ENCODE measurements at regions of chr1 and their contacts with region 1.

Region 1: DNA sequence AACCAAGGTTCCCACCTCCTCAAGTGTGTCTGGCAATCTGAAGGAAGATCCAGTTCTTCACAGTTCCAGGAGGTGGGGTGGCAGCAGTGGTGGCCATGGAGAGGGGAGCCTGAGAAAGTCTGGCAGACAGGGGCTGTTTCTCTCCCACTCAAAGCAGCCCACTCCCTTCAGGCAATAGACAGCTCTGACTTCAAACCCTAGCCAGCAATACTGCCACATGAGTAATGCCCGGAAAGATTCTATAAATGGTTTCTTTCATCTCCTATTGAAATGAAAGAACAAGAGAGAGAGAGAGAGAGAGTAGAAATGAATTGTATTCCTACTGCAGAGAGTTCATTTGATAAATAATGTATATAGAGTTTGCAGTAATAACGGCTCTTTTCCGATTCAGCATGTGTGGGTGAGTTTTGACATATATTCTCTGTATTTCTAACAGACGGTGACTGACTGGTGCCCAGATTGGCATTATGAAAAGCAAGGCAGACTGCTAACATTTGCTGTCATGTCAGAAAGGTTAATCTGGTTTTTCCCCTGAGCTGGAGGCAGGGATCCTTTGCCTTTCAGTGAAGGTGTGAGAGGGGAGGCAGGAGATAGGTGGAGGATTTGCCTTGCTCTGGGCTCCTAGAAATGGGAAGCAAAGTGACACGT is 267.1 kb upstream of the KIAA0040 start:
- DNase-seq: no peak
- H3K4me3 ChIP-seq: no peak overlapping the region
- H3K27ac ChIP-seq: no peak overlapping the region
- H3K4me1 ChIP-seq: no peaks in the 10 kb centered on the region
- H3K27me3 ChIP-seq: no peaks in the 10 kb centered on the region
- CTCF ChIP-seq: no peak
- POLR2A ChIP-seq: no peak

Region 2: GRCh38 chr1:174032671-174033222 is 1427.0 kb before region 1 on chr1:
- intact Hi-C with region 1: no loop called
- DNase-seq: no peak
- H3K4me3 ChIP-seq: no peak overlapping the region
- H3K27ac ChIP-seq: no peak overlapping the region
- H3K4me1 ChIP-seq: no peaks in the 10 kb centered on the region
- H3K27me3 ChIP-seq: no peaks in the 10 kb centered on the region
- CTCF ChIP-seq: no peak
- POLR2A ChIP-seq: no peak

Region 3: DNA sequence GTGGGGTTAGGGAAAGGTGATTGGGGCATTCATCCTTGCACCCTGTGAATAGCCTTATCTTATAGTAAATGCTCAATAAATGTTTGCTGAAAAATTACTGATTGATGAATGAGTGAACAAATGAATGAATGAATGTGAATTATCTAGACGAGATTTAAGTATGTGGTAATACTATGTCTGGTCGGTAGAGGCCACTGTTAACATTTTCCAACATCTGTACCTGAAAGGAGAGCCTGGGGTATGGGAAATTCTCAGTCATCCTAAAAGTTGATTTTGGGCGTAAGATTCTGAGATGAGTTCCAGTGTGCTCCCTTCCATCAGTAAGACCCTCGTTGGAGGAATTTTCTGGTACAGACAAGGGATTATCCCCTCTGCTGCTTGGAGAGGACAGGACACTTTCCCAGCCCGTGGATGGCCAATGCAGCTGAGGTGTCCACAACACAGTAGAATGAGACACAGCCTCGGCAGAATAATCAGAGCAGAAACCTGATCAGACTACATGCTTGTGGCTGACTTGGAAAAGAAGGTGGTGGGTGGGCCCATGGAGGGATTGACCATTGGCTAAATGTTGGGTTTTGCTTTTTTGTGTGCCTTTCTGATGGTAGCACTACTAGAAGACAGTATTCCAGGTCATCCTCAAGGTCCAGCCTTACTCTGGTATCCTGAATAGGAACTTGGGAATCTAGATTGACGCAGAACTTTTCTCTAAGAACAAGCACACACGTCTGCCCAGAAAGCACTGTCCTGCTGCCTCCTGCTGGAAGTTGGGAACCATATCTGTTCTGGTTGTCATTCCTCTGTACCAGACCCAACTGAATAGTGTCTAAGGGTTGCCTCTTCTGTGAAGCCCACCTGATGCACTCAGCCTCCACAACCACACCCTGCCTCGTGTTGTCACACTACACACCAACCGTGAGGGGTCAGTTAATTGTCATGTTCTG is 21.7 kb after region 1 on chr1:
- intact Hi-C with region 1: no loop called
- DNase-seq: no peak
- H3K4me3 ChIP-seq: no peak overlapping the region
- H3K27ac ChIP-seq: no peak overlapping the region
- H3K4me1 ChIP-seq: no peaks in the 10 kb centered on the region
- H3K27me3 ChIP-seq: no peaks in the 10 kb centered on the region
- CTCF ChIP-seq: peak; percentile 45 to 58 (median 51)
- POLR2A ChIP-seq: no peak

Region 4: GRCh38 chr1:176499671-176500070 is 1040.0 kb after region 1 on chr1:
- intact Hi-C with region 1: loop called (anchors 5 kb)
- DNase-seq: no peak
- H3K4me3 ChIP-seq: no peak overlapping the region
- H3K27ac ChIP-seq: no peak overlapping the region
- H3K4me1 ChIP-seq: no peaks in the 10 kb centered on the region
- H3K27me3 ChIP-seq: no peaks in the 10 kb centered on the region
- CTCF ChIP-seq: no peak
- POLR2A ChIP-seq: no peak

Region 5: DNA sequence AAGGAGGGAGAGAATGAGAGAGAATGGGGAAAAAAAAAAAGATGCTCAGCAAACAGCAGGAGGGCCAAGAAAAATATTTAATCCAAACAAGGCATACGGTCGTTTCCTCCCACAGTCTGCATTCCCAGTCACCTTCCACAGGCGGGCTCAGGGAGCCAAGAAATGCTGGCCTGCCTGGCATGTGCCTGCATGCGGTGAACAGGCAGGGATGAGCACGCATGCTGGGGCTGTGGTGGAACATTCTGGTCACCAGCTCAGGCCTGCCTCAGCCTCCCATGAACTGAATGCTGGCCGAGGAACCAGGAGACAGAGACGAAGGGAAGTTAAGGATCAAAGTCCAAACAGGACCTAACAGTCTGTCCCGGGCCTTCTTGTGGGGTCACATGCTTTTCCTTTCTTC is 1369.5 kb after region 1 on chr1:
- intact Hi-C with region 1: no loop called
- DNase-seq: peak in 1 of 2 donors; percentile 37
- H3K4me3 ChIP-seq: no peak overlapping the region
- H3K27ac ChIP-seq: no peak overlapping the region
- H3K4me1 ChIP-seq: no peaks in the 10 kb centered on the region
- H3K27me3 ChIP-seq: no peaks in the 10 kb centered on the region
- CTCF ChIP-seq: no peak
- POLR2A ChIP-seq: no peak

Measured in breast epithelium (tissue), 4 donors.